ENCODE measurements at regions of chr3 and their contacts with region 1.

Region 1: DNA sequence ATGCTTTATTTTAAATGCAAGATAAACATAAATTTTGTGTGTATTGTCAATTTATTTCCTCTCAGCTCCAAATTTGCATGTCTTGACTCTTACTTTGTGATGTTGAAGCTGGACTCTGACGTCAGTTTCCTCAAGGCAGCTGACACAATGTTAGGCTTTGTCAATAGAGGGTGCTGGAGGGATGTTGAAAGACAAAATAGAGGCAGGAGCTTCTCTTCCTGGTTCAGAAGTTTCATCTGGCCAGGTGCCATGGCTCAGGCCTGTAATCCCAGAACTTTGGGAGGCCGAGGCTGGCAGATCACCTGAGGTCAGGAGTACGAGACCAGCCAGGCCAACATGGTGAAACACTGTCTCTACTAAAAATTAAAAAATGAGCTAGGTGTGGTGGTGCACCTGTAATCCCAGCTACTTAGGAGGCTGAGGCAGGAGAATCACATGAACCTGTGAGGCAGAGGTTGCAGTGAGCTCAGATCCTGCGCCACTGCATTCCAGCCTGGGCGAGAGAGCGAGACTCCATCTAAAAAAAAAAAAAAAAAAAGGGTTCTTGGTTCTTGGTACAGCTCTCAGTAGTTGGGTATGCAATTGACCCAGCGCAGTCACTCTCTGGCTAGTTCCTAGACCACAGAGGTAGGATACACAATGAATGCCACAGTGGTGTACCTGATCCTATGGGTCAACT is 408.4 kb downstream of the GBE1 start:
- DNase-seq: peak; percentile 8
- ATAC-seq: no peak
- H3K4me3 ChIP-seq: no peak overlapping the region
- H3K27ac ChIP-seq: no peak overlapping the region
- H3K4me1 ChIP-seq: no peaks in the 10 kb centered on the region
- H3K27me3 ChIP-seq: no peaks in the 10 kb centered on the region
- CTCF ChIP-seq: no peak
- POLR2A ChIP-seq: no peak
- RAD21 ChIP-seq: no peak

Region 2: DNA sequence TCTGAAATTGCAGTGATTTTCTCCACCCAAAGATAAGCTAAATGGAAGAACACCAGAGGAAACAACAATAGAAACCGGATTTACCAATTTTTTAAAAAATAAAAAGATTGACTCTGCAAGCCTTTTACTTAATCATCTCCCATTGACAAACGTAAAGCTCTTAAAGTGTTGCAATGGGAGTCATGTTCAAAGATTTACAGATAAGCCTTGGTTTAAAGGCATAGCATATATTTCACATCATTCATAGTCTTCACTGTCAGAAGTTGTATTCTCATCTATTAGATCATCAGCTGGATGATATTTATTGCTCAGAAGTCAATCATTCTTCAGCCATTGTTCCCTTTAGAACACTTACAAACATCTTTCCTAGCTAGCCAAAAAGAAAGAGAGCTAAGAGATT is 10.8 kb after region 1 on chr3:
- CTCF ChIA-PET with region 1: no interaction called
- POLR2A ChIA-PET with region 1: interaction called, 16 read pairs
- dilution Hi-C with region 1: no loop called
- in situ Hi-C with region 1: no loop called
- intact Hi-C with region 1: no loop called
- DNase-seq: no peak
- ATAC-seq: no peak
- H3K4me3 ChIP-seq: no peak overlapping the region
- H3K27ac ChIP-seq: no peak overlapping the region
- H3K4me1 ChIP-seq: no peaks in the 10 kb centered on the region
- H3K27me3 ChIP-seq: no peaks in the 10 kb centered on the region
- CTCF ChIP-seq: no peak
- POLR2A ChIP-seq: no peak
- RAD21 ChIP-seq: no peak

Region 3: GRCh38 chr3:81379851-81380633 is 27.0 kb after region 1 on chr3:
- CTCF ChIA-PET with region 1: no interaction called
- POLR2A ChIA-PET with region 1: no interaction called
- dilution Hi-C with region 1: no loop called
- in situ Hi-C with region 1: no loop called
- intact Hi-C with region 1: no loop called
- DNase-seq: no peak
- ATAC-seq: no peak
- H3K4me3 ChIP-seq: no peak overlapping the region
- H3K27ac ChIP-seq: no peak overlapping the region
- H3K4me1 ChIP-seq: no peaks in the 10 kb centered on the region
- H3K27me3 ChIP-seq: no peaks in the 10 kb centered on the region
- CTCF ChIP-seq: no peak
- POLR2A ChIP-seq: no peak
- RAD21 ChIP-seq: no peak